ENCODE measurements at regions of chr4 and their contacts with region 1.

Region 1: GRCh38 chr4:102430461-102430910 is 70.7 kb upstream of the NFKB1 start:
- H3K4me3 Mint-ChIP-seq: peak overlapping the region; percentile 86
- H3K27ac Mint-ChIP-seq: peak overlapping the region; percentile 83
- H3K4me1 Mint-ChIP-seq: no peaks in the 10 kb centered on the region
- H3K27me3 Mint-ChIP-seq: peaks cover 2% of the 10 kb centered on the region

Region 2: DNA sequence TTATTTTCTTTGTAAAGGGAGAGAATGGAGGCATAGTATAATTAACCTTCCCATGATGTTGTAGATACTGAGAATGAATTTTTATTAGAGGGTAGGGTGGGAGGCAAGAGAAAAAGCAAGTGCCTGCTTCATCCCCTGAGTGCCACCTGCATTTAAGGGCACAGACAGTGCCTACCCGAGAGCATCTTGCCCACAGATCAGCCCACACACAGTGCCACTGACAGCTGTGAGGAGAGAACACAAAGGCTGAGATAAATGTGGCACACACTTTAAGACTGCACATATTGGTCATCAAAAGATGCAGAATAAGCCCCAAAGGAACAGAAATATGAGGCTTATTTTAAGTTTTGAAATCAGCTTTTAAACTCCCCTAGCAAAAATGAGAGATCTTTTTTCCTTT is 336.0 kb before region 1 on chr4:
- intact Hi-C with region 1: no loop called
- H3K4me3 Mint-ChIP-seq: no peak overlapping the region
- H3K27ac Mint-ChIP-seq: no peak overlapping the region
- H3K4me1 Mint-ChIP-seq: no peaks in the 10 kb centered on the region
- H3K27me3 Mint-ChIP-seq: no peaks in the 10 kb centered on the region

Region 3: DNA sequence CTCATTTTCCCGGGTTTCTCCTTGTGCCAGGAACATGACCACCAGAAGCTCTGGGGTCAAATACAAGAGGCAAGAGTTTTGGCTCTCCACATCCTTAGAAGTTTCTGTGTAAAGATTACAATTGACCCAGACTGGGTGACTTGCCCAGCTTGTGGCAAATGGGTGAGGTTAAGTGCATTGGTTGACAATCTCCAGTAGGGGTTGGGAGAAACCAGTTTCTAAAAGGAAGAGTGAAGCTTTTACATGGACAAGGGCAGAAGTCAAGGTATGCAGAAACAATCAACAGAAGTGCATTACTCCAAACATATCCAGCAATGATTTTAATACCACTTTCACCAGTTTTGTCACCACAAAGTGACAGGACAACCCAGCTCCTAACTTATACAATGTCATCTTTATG is 175.0 kb before region 1 on chr4:
- intact Hi-C with region 1: loop called (anchors 5 kb)
- H3K4me3 Mint-ChIP-seq: no peak overlapping the region
- H3K27ac Mint-ChIP-seq: no peak overlapping the region
- H3K4me1 Mint-ChIP-seq: peaks cover 7% of the 10 kb centered on the region
- H3K27me3 Mint-ChIP-seq: no peaks in the 10 kb centered on the region

Region 4: DNA sequence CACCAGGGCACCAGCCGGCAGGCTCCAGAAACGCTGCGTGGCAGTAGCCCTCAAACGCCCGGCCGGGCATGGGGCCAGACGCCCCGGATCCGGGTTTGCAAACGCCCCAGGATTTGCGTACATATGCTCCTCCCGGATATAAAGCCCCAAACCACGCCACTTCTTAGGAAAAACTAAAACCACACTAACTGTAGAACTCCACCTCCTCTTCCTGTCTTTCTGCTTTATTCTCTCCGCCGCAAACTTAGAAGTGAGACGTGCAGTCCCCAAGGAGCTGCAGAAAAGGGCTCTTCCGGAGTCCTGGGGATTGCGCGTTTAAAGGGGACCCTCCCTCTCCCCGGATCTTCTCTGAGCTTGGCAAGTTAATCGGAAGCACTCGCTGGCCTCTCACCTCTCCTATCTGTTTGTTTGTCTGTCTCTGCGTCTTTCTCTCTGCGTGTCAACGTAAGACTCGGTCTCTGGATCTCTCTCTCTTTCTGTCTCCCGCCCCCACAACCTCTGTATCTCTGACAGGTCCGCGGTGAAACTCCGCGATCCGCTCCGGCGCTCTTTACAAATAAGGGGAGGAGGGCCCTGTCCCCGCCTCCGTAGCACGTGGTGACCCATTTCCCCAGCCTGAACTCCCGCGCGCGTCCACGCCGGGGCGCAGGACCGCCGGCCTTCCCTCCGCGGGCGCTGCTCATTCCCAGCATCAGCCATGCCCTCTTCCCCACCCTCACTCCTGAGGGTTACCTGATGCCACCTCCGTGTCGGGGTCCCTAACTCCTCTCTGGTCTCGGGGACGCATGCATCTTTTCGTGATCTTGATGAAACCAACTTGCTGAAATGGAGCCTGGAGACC is 85.3 kb before region 1 on chr4 and contains the start of gene SLC39A8:
- intact Hi-C with region 1: loop called (anchors 1 kb)
- H3K4me3 Mint-ChIP-seq: peak within 1 kb of the TSS; percentile 93
- H3K27ac Mint-ChIP-seq: peak within 1 kb of the TSS; percentile 97
- H3K4me1 Mint-ChIP-seq: peaks cover 27% of the 10 kb centered on the region
- H3K27me3 Mint-ChIP-seq: no peaks in the 10 kb centered on the region

Region 5: GRCh38 chr4:103091601-103092223 is 661.2 kb after region 1 on chr4:
- intact Hi-C with region 1: loop called (anchors 5 kb)
- H3K4me3 Mint-ChIP-seq: no peak overlapping the region
- H3K27ac Mint-ChIP-seq: no peak overlapping the region
- H3K4me1 Mint-ChIP-seq: no peaks in the 10 kb centered on the region
- H3K27me3 Mint-ChIP-seq: no peaks in the 10 kb centered on the region

Measured in dendritic cell treated with granulocyte-macrophage colony-stimulating factor and Interleukin-4, amounts not matched to agents 40 ng/mL and 50 ng/mL, for 4 days (primary cell).